T-cell (primary cell): ENCODE measurements at regions of chr2 and their contacts with region 1.

Region 1: GRCh38 chr2:206657087-206657486 is 14.8 kb downstream of the FAM237A start:
- DNase-seq: no peak
- ATAC-seq: no peak
- H3K4me3 ChIP-seq: no peak overlapping the region
- H3K4me3 Mint-ChIP-seq: no peak overlapping the region
- H3K27ac ChIP-seq: no peak overlapping the region
- H3K27ac Mint-ChIP-seq: no peak overlapping the region
- H3K4me1 ChIP-seq: no peaks in the 10 kb centered on the region
- H3K4me1 Mint-ChIP-seq: no peaks in the 10 kb centered on the region
- H3K27me3 ChIP-seq: no peaks in the 10 kb centered on the region
- H3K27me3 Mint-ChIP-seq: peaks cover 4 to 5% of the 10 kb centered on the region in 2 donors

Region 2: GRCh38 chr2:207352978-207353671 is 696.0 kb after region 1 on chr2:
- CTCF ChIA-PET with region 1: interaction called in 1 of 2 experiments, 12 read pairs
- POLR2A ChIA-PET with region 1: no interaction called
- DNase-seq: peak in 23 of 35 experiments; percentile 1 to 43 (median 13)
- ATAC-seq: peak; percentile 64 to 81 (median 72)
- H3K4me3 ChIP-seq: no peak overlapping the region
- H3K4me3 Mint-ChIP-seq: no peak overlapping the region
- H3K27ac ChIP-seq: no peak overlapping the region
- H3K27ac Mint-ChIP-seq: no peak overlapping the region
- H3K4me1 ChIP-seq: peaks cover 2% of the 10 kb centered on the region in 2 experiments
- H3K4me1 Mint-ChIP-seq: peaks cover 7 to 9% (median 9%) of the 10 kb centered on the region in 3 donors
- H3K27me3 ChIP-seq: no peaks in the 10 kb centered on the region
- H3K27me3 Mint-ChIP-seq: no peaks in the 10 kb centered on the region

Region 3: GRCh38 chr2:207658156-207658555 is 1001.1 kb after region 1 on chr2:
- CTCF ChIA-PET with region 1: no interaction called
- POLR2A ChIA-PET with region 1: interaction called in 1 of 2 experiments, 10 read pairs
- DNase-seq: no peak
- ATAC-seq: no peak
- H3K4me3 ChIP-seq: no peak overlapping the region
- H3K4me3 Mint-ChIP-seq: no peak overlapping the region
- H3K27ac ChIP-seq: no peak overlapping the region
- H3K27ac Mint-ChIP-seq: no peak overlapping the region
- H3K4me1 ChIP-seq: no peaks in the 10 kb centered on the region
- H3K4me1 Mint-ChIP-seq: no peaks in the 10 kb centered on the region
- H3K27me3 ChIP-seq: no peaks in the 10 kb centered on the region
- H3K27me3 Mint-ChIP-seq: no peaks in the 10 kb centered on the region